Right ventricle myocardium superior (tissue), 1 donor: ENCODE measurements at regions of chr12 and their contacts with region 1.

Region 1: DNA sequence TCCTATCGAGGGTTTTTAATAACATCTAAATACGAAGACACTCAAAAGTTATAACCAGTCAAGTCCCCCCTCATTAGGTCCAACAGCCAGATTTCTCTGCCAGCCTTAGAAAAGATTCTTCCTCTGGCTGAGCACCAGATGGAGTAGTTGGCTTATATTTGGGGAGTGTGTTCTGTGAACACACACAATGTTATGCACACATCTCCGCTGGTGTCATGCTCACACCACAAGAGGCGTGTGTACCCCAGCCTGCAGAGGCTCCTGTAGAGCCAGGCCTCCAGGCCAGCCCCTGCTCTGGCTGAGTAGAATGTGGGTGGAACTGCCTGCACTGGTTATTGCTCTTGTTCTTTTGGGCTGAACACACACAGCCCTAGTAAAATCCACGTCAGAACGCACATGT is 64.0 kb downstream of the PIWIL1 start:
- DNase-seq: no peak
- ATAC-seq: peak; percentile 68

Region 2: DNA sequence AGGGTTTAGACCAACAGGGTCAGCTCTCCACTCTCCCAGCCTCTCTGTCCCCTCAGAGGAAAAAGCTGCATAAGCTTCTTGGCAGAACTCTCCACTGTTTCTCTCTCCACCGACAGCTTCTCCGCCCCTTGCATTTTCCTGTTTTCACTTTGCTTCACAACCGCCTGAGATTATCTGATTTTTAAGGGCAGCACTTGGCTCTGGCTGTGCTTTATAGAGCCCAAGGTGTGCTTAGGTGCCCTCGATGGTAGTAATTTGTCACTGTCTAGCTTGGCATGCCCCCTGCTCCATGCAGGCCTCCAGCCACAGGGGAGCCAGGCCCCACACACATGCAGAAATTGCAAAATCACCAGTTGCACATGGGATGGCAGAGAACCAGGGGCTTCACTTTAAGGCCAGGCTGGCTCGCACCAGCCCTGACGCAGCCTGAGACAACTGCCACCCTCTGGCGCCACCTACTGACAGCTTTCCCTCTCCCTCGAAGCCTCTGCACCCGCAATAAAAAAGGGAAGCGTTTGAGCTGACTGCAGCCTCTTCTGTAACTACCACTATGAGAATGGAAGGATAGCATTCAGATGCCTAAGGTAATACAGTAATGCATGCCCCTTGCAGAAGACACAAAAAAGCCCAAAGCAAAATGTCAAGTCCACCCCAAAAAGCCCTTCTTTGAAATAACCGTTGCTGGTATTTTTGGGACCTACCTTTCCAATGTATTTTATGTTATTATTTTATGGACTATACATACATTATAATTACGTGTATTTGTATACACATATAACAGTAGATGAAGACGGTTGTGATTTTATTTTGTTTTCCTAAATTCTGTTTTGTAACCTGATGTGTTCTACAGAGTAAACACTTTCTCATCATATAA is 346.4 kb after region 1 on chr12:
- intact Hi-C with region 1: loop called (anchors 2 kb)
- DNase-seq: peak; percentile 88
- ATAC-seq: peak; percentile 95

Region 3: DNA sequence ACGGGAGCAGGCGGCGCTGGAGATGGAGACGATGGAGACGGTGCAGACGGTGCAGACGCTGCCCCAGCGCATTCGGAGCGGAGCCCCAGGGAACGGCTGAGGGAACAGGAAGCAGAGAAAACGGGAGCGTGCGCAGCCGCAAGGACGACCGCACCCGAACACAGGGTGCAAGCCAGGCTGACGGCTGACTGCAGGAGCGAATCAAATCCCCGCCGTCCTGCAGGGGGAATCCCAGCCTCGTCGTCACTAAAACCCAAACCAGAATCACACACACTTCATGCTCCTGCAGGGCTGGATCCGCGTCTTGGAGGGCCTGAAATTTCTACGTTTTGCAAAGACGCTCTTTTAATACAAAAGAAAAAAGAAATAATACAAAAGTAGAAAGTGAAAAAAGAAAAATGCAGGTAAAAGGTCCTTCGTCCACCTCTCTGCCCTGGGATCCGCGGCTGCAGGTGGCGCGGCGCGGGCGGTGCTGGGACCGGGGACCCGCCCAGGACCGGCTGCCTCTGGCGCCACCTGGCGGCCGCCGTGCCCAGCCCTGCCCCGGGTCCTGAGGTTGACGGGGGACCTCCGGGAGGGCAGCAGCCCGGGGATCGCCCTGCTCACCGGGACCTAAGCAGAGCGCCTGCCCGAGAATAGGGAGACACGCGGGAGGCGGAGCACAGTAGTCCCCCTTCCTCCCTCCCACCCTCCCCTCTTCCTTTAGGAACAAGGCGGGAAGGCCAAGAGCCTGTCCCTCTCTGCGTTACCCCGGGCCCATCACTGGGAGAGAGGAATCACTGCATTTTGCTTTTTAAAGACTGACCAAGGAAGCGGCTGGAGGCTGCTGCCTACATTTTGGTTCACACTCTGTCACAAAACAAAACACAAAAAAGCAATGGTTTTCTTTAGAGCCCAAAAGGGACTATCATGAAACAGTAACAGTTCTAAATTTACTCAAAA is 417.2 kb after region 1 on chr12:
- intact Hi-C with region 1: loop called (anchors 10 kb)
- DNase-seq: peak; percentile 81
- ATAC-seq: peak; percentile 98